Sigmoid colon (tissue), 7 donors: ENCODE measurements at regions of chr1 and their contacts with region 1.

Region 1: DNA sequence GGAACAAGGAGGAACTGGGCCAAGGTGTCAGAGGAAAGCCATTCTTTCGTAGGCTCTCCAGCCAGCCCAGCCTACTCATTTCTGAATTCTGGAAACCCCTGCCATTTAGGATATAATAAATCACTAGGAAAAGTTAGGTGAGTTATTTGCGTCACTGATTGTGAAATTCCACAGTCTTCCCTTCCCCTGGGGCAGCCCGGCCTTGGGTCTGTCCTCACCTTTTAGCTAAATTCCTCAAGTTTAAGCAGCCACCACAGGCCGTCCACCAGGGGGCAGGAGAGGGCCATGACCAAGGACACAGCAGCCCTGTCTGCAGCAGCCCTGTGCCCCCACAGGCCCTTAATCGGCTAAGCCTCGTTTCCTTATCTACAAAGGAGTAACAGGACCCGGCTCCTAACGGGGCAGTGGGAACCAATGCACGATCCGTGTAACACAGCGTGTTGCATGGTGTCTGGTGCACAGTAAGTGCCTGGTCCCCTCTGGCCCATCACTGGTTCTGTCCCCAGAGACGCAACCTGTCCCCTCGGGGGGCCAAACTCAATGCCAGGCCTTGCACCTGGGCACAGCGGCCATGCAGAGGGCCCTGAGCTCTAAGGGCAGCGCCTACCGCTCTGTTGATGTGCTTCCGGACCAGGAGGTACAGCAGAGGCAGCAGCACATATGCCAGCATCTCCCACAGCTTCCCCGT is 18.1 kb downstream of the GPR157 start:
- DNase-seq: peak; percentile 93
- H3K4me3 ChIP-seq: no peak overlapping the region
- H3K27ac ChIP-seq: no peak overlapping the region
- H3K4me1 ChIP-seq: peaks cover 0 to 9% (median 3%) of the 10 kb centered on the region in 4 donors
- H3K27me3 ChIP-seq: no peaks in the 10 kb centered on the region
- CTCF ChIP-seq: peak; percentile 82 to 97 (median 88)
- EP300 ChIP-seq: no peak
- POLR2A ChIP-seq: no peak

Region 2: DNA sequence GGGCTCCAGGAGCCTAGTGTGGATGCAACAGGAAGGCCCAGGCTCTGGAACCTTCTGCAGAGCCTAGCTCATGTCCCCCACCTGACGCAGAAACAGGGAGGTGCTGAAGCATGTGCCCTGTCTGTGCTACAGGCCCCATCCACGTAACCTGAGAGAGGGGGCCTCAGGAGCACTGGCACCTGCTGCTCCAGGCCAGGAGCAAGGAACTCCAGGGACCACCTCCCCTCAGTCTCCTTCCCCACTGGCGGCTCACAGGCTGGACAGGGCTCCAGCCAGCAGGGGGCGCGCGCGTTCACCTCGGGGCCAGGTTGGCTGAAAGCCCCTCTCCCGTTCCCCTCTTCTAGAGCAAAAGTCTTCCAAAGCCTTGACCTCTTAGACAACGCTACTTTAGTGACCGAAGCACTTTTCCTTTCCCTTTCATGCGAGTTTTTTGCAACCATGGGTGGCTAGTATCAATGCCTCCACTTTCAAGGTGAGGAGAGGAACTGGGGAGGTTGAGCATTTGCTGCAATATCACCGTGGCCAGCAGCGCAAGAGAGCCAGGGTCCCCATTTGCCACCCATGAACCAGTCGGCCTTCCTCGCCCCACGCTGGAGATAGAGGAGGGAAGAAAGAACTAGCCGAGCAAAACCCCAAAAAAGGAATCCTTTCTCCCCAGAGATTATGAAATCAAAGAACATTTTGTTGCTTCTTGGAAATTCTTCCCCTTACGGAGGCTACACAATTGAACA is 70.5 kb after region 1 on chr1:
- intact Hi-C with region 1: loop called (anchors 5 kb)
- DNase-seq: peak; percentile 83
- H3K4me3 ChIP-seq: peak overlapping the region; percentile 38 to 71 (median 59)
- H3K27ac ChIP-seq: peak overlapping the region in 3 of 4 donors; percentile 41 to 63 (median 61)
- H3K4me1 ChIP-seq: peaks cover 0 to 34% (median 32%) of the 10 kb centered on the region in 4 donors
- H3K27me3 ChIP-seq: peaks cover 9 to 29% (median 20%) of the 10 kb centered on the region in 3 donors
- CTCF ChIP-seq: peak; percentile 80 to 94 (median 86)
- EP300 ChIP-seq: no peak
- POLR2A ChIP-seq: no peak

Region 3: GRCh38 chr1:10074059-10074851 is 963.4 kb after region 1 on chr1:
- intact Hi-C with region 1: no loop called
- DNase-seq: no peak
- H3K4me3 ChIP-seq: no peak overlapping the region
- H3K27ac ChIP-seq: peak overlapping the region; percentile 35 to 80 (median 60)
- H3K4me1 ChIP-seq: peaks cover 0 to 43% (median 31%) of the 10 kb centered on the region in 4 donors
- H3K27me3 ChIP-seq: no peaks in the 10 kb centered on the region
- CTCF ChIP-seq: no peak
- EP300 ChIP-seq: no peak
- POLR2A ChIP-seq: no peak